Aorta (tissue), 5 donors: ENCODE measurements at regions of chr6 and their contacts with region 1.

Region 1: GRCh38 chr6:133923938-133924593 is 29.0 kb upstream of the TBPL1 start:
- DNase-seq: peak in 1 of 2 donors; percentile 61
- ATAC-seq: peak; percentile 92
- H3K4me3 ChIP-seq: no peak overlapping the region
- H3K27ac ChIP-seq: no peak overlapping the region
- H3K4me1 ChIP-seq: no peaks in the 10 kb centered on the region
- H3K27me3 ChIP-seq: no peaks in the 10 kb centered on the region

Region 2: GRCh38 chr6:133701633-133702331 is 222.3 kb before region 1 on chr6:
- intact Hi-C with region 1: no loop called
- DNase-seq: no peak
- ATAC-seq: no peak
- H3K4me3 ChIP-seq: no peak overlapping the region
- H3K27ac ChIP-seq: no peak overlapping the region
- H3K4me1 ChIP-seq: peaks cover 0 to 5% of the 10 kb centered on the region in 2 donors
- H3K27me3 ChIP-seq: no peaks in the 10 kb centered on the region

Region 3: GRCh38 chr6:133973109-133973971 is 49.3 kb after region 1 on chr6:
- intact Hi-C with region 1: loop called in 1 of 2 experiments (anchors 5 kb)
- DNase-seq: no peak
- ATAC-seq: peak; percentile 79
- H3K4me3 ChIP-seq: no peak overlapping the region
- H3K27ac ChIP-seq: no peak overlapping the region
- H3K4me1 ChIP-seq: peaks cover 4 to 9% of the 10 kb centered on the region in 2 donors
- H3K27me3 ChIP-seq: no peaks in the 10 kb centered on the region

Region 4: DNA sequence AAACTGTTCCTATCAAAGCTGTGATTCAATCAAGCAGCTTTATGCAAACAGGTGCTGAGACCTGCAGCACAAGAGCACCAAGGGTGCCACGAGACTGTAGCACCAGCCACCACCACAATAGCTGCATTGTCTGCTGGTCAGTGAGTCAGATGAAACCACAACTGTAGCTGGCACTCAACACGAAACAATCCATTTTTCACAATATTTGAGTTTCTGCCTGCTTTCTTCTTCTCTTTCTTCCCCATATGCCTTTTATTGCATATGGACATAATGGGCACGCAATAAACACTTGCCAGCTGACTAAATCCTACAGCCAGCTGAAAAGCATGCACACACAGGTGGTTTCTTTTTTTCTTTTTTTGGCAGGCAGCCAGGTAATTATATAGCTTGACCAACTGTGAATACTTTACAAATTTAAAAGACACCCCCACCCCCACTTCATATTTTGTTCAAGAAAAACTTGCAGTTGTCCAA is 111.8 kb after region 1 on chr6:
- intact Hi-C with region 1: no loop called
- DNase-seq: no peak
- ATAC-seq: no peak
- H3K4me3 ChIP-seq: no peak overlapping the region
- H3K27ac ChIP-seq: no peak overlapping the region
- H3K4me1 ChIP-seq: peaks cover 0 to 2% of the 10 kb centered on the region in 2 donors
- H3K27me3 ChIP-seq: no peaks in the 10 kb centered on the region

Region 5: DNA sequence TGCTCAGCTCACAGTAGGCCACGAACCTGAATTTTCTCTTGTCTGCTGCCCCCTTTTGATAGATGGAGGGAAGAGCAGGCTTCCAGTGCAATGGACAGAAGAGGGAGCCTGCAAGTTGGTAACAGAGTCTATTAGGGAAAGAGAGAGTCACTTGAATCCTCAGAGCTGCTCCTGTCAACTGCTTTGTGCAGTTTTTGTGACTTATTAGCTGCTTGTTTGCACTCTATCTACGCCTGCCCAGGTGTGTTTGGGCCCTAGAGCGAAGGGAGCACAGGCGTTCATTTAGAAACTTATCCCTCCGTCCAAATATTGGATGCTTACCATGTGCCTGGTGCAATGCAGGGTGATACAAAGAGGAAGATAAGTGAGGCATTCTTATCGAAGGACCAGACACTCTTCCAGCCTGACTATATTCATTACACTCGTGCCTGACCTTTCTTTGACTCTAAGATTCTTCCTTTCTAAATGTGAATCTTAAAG is 139.9 kb after region 1 on chr6:
- intact Hi-C with region 1: loop called (anchors 10 kb)
- DNase-seq: peak in 1 of 2 donors; percentile 62
- ATAC-seq: peak; percentile 88
- H3K4me3 ChIP-seq: no peak overlapping the region
- H3K27ac ChIP-seq: no peak overlapping the region
- H3K4me1 ChIP-seq: peaks cover 0 to 15% of the 10 kb centered on the region in 2 donors
- H3K27me3 ChIP-seq: no peaks in the 10 kb centered on the region

Region 6: DNA sequence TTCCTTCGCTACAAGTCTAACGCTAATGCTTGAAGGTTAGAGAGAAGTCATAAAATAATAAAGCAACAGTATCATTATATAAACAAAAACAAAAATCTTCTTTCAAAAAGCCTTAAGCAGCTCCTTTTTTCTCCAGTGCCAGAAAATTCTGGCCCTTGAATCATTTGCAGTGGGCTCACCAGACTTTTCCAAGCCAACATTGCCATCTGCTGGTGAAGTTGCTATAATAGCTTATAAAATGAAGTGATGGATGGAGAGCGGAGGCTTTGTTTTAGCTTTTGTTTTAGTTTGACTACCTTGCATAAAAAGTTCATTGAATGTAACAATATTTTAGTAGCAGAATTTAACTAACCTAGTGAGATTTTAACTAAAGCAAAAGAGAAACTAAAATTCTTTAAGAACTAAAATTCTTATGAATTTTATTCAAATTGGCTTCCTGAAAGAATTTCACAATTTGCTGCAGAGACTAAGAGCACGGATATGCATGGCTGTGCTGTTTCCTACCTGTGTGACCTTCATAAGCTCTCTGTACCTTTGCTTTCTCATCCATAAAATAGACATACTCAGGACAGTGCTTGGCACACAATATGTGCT is 173.1 kb after region 1 on chr6:
- intact Hi-C with region 1: loop called (anchors 2 kb)
- DNase-seq: no peak
- ATAC-seq: peak; percentile 70
- H3K4me3 ChIP-seq: no peak overlapping the region
- H3K27ac ChIP-seq: no peak overlapping the region
- H3K4me1 ChIP-seq: no peaks in the 10 kb centered on the region
- H3K27me3 ChIP-seq: no peaks in the 10 kb centered on the region